ENCODE measurements at regions of chr12 and their contacts with region 1.

Region 1: GRCh38 chr12:119876761-119877638 is at the start of gene CIT:
- DNase-seq: peak; percentile 91 to 95
- H3K4me3 ChIP-seq: peak within 1 kb of the TSS; percentile 86 to 97 (median 93)
- H3K27ac ChIP-seq: peak within 1 kb of the TSS; percentile 88; the same call in 1 of the 2 replicates
- H3K4me1 ChIP-seq: no peaks in the 10 kb centered on the region; a peak in 2 of 7 replicates
- H3K27me3 ChIP-seq: no peaks in the 10 kb centered on the region
- CTCF ChIP-seq: no peak
- EP300 ChIP-seq: no peak
- POLR2A ChIP-seq: peak; percentile 84 to 91
- RAD21 ChIP-seq: peak; percentile 5 to 24; a peak in 2 of 4 replicates
- total RNA-seq, gene CIT: 50.1 and 60.9 TPM in 2 replicates

Region 2: GRCh38 chr12:119864591-119864990 is 12.4 kb before region 1 on chr12:
- CTCF ChIA-PET with region 1: no interaction called
- POLR2A ChIA-PET with region 1: interaction called, 13 read pairs
- DNase-seq: no peak
- H3K4me3 ChIP-seq: no peak overlapping the region
- H3K27ac ChIP-seq: no peak overlapping the region
- H3K4me1 ChIP-seq: no peaks in the 10 kb centered on the region
- H3K27me3 ChIP-seq: no peaks in the 10 kb centered on the region
- CTCF ChIP-seq: no peak
- EP300 ChIP-seq: no peak
- POLR2A ChIP-seq: no peak
- RAD21 ChIP-seq: no peak